Psoas muscle (tissue), 8 donors: ENCODE measurements at regions of chr3 and their contacts with region 1.

Region 1: DNA sequence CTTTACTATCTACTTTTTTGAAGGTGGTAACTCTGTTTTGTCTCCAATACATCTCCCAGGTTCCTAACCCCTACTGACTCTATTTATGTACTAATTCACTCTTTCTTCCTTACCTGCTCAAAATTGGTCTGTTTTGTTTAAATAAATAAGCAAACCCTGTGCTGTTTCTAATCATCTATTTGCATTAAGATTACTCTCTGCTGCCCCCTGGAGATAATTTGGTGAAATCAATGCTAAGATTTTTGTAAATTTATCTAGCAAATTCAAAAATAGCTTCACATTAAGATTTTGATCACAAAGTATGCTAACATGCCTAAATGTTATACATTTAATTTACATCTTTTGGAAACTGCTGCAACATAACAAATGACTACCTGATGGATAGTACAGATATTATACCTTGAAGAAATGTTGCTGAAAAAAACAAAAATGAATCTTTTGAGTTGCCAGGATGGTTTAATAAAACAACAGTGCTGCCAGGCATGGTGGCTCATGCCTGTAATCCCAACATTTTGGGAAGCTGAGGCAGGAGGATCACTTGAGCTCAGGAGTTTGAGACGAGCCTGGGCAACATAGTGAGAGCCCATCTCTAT is 4.4 kb upstream of the CD200R1 start:
- DNase-seq: no peak
- ATAC-seq: no peak
- H3K4me3 ChIP-seq: no peak overlapping the region
- H3K27ac ChIP-seq: no peak overlapping the region
- H3K4me1 ChIP-seq: peaks cover 4% of the 10 kb centered on the region
- H3K27me3 ChIP-seq: no peaks in the 10 kb centered on the region
- CTCF ChIP-seq: peak; percentile 68

Region 2: GRCh38 chr3:112582244-112582874 is 397.0 kb before region 1 on chr3:
- intact Hi-C with region 1: loop called in 1 of 2 experiments (anchors 5 kb)
- DNase-seq: no peak
- ATAC-seq: no peak
- H3K4me3 ChIP-seq: no peak overlapping the region
- H3K27ac ChIP-seq: no peak overlapping the region
- H3K4me1 ChIP-seq: no peaks in the 10 kb centered on the region
- H3K27me3 ChIP-seq: no peaks in the 10 kb centered on the region
- CTCF ChIP-seq: peak; percentile 48

Region 3: DNA sequence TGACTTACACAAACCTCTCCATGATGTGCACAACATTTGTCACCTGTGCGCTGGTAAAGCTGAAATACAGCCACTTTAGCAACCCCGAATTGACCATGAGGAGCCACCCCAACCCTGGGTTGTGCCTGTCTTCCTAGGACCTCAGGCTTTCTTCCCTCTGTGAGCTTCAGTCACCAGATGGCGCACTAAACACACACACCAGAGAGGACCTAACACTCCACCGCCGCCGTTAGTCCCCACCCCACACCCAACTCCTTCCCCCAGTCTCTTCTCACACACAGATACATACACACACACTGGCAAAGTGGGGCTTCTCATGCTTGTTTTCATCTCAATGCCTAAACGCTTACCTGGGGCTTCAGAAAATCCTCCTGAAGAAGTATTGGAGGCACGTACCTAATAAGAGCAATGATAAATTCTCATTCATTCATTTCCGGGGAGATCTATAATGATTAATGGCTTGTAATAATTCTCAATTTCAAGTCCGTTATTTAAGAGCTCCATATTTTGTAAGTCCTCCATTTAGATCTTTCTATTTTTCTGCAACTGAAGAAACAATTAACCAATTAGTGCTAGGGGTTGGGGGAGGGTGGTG is 336.3 kb before region 1 on chr3:
- intact Hi-C with region 1: loop called (anchors 2 to 5 kb)
- DNase-seq: peak; percentile 78 to 80
- ATAC-seq: peak; percentile 79 to 89 (median 83)
- H3K4me3 ChIP-seq: peak overlapping the region; percentile 31
- H3K27ac ChIP-seq: no peak overlapping the region
- H3K4me1 ChIP-seq: peaks cover 18% of the 10 kb centered on the region
- H3K27me3 ChIP-seq: no peaks in the 10 kb centered on the region
- CTCF ChIP-seq: peak; percentile 72

Region 4: DNA sequence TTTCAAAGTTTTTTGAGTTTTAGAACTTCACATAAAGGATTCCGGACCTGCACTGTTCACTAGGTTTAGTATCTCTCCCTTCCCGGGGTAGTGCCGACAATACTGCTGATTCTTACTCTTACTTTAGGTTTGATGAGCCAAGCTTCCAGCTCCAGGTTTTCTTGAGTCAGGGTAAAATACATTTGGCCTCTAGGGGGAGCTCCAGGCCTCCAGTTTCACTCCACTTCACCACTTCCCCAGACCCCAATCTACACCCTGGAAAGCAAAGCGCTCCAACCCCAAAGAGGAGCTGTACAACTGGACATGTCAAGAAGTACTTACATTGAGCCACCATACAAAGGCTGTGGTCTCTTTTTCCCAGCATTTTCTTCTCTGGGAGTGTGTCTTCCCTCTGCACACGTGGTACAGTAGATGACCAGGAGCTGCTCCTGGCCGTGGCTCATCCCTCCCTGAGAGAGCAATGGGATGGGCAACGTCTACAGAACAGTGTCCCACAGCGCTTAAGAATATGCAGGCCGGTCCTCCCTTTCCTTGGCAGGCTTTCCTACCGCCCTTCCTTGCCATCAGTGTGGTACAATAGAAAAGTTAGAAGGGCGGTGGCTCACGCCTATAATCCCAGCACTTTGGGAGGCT is 244.5 kb before region 1 on chr3:
- intact Hi-C with region 1: loop called (anchors 2 to 10 kb)
- DNase-seq: peak in 1 of 2 donors; percentile 42
- ATAC-seq: peak in 3 of 4 donors; percentile 19 to 54 (median 37)
- H3K4me3 ChIP-seq: no peak overlapping the region
- H3K27ac ChIP-seq: no peak overlapping the region
- H3K4me1 ChIP-seq: no peaks in the 10 kb centered on the region
- H3K27me3 ChIP-seq: no peaks in the 10 kb centered on the region
- CTCF ChIP-seq: peak; percentile 48

Region 5: GRCh38 chr3:113249111-113249510 is 269.8 kb after region 1 on chr3:
- intact Hi-C with region 1: no loop called
- DNase-seq: peak in 1 of 2 donors; percentile 55
- ATAC-seq: peak; percentile 39 to 71 (median 56)
- H3K4me3 ChIP-seq: no peak overlapping the region
- H3K27ac ChIP-seq: no peak overlapping the region
- H3K4me1 ChIP-seq: no peaks in the 10 kb centered on the region
- H3K27me3 ChIP-seq: no peaks in the 10 kb centered on the region
- CTCF ChIP-seq: no peak